Left ventricle myocardium inferior (tissue), 1 donor: ENCODE measurements at regions of chr7 and their contacts with region 1.

Region 1: GRCh38 chr7:93890464-93891068 is at the start of gene TFPI2:
- DNase-seq: peak; percentile 21
- H3K4me3 ChIP-seq: peak within 1 kb of the TSS; percentile 76
- H3K27ac ChIP-seq: peak within 1 kb of the TSS; percentile 62
- H3K4me1 ChIP-seq: peaks cover 31% of the 10 kb centered on the region
- H3K27me3 ChIP-seq: peaks cover 20% of the 10 kb centered on the region
- CTCF ChIP-seq: peak; percentile 11
- total RNA-seq, gene TFPI2: 1.5 TPM

Region 2: DNA sequence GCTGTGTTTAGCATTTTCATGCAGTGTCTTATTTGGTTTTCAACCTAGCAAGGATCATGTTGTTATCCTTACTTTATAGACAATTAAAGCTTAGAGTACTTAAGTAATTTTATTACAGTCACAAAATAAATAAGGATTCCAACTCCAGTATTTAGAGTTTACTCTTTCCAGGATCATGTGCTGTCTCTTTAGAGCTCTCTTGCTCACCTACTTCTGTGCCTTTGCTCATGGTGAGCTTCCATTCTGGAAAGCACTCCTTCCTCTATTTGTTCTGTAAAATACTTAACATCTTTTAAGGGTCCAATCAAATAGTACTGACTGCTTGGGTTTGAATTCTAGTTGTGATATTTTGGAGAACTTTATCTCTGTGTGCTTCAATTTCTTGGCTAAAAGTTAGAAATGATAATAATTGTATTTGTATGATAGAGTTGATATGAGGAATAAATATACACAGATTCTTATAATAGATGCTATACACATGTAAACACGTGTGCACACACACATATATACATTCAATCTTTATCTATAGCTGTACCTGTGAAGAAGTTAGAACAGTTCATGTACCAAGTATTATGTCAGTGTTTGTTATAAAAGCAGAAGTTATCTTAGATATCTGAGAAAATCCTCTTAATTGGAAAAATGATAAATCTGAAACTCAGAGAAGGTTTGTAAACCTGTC is 297.8 kb before region 1 on chr7:
- intact Hi-C with region 1: no loop called
- DNase-seq: no peak
- H3K4me3 ChIP-seq: no peak overlapping the region
- H3K27ac ChIP-seq: no peak overlapping the region
- H3K4me1 ChIP-seq: no peaks in the 10 kb centered on the region
- H3K27me3 ChIP-seq: no peaks in the 10 kb centered on the region
- CTCF ChIP-seq: no peak

Region 3: DNA sequence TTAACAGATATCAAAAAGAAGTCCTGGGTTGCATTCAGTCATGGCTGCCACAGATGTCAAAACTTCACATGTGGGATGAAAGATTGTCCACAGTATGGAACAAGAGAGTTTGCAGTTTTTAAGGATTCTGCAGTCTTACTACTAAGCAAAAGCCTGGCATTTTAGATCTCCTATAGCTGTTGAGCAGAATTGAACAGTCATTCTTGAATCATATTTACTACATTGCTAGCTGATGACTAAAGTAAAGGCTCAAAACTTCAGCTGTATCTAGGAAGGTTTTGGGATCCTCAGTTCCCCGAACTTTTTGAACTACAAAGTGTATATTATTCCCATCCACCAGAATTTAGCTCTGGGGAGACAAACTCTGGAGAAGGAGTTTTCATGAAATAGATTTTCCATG is 82.6 kb after region 1 on chr7:
- intact Hi-C with region 1: no loop called
- DNase-seq: no peak
- H3K4me3 ChIP-seq: no peak overlapping the region
- H3K27ac ChIP-seq: peak overlapping the region; percentile 3
- H3K4me1 ChIP-seq: no peaks in the 10 kb centered on the region
- H3K27me3 ChIP-seq: no peaks in the 10 kb centered on the region
- CTCF ChIP-seq: no peak

Region 4: GRCh38 chr7:94004024-94004951 is 113.7 kb after region 1 on chr7 and contains the start of gene BET1:
- intact Hi-C with region 1: loop called (anchors 10 kb)
- DNase-seq: peak; percentile 94
- H3K4me3 ChIP-seq: peak within 1 kb of the TSS; percentile 82
- H3K27ac ChIP-seq: peak within 1 kb of the TSS; percentile 86
- H3K4me1 ChIP-seq: peaks cover 41% of the 10 kb centered on the region
- H3K27me3 ChIP-seq: no peaks in the 10 kb centered on the region
- CTCF ChIP-seq: no peak
- total RNA-seq, gene BET1: 14.5 TPM